Mammary epithelial cell (primary cell): ENCODE measurements at regions of chr5 and their contacts with region 1.

Region 1: GRCh38 chr5:151080623-151081430 is at the start of gene TNIP1:
- DNase-seq: peak; percentile 96
- H3K4me3 ChIP-seq: peak within 1 kb of the TSS; percentile 82 to 89 (median 85)
- H3K27ac ChIP-seq: peak within 1 kb of the TSS; percentile 99
- H3K4me1 ChIP-seq: peaks cover 67% of the 10 kb centered on the region
- H3K27me3 ChIP-seq: no peaks in the 10 kb centered on the region
- CTCF ChIP-seq: no peak
- total RNA-seq, gene TNIP1: 74.3 to 247 TPM

Region 2: GRCh38 chr5:151051066-151051930 is 29.5 kb before region 1 on chr5:
- CTCF ChIA-PET with region 1: interaction called, 3 read pairs
- dilution Hi-C with region 1: no loop called
- in situ Hi-C with region 1: no loop called
- intact Hi-C with region 1: loop called (anchors 1 kb)
- DNase-seq: peak; percentile 51
- H3K4me3 ChIP-seq: no peak overlapping the region
- H3K27ac ChIP-seq: no peak overlapping the region
- H3K4me1 ChIP-seq: no peaks in the 10 kb centered on the region
- H3K27me3 ChIP-seq: no peaks in the 10 kb centered on the region
- CTCF ChIP-seq: peak; percentile 83 to 85

Region 3: GRCh38 chr5:151093476-151093889 is 12.7 kb after region 1 on chr5:
- CTCF ChIA-PET with region 1: no interaction called
- dilution Hi-C with region 1: no loop called
- in situ Hi-C with region 1: no loop called
- intact Hi-C with region 1: loop called (anchors 1 kb)
- DNase-seq: peak; percentile 97
- H3K4me3 ChIP-seq: peak overlapping the region in 2 of 3 experiments; percentile 8 to 14
- H3K27ac ChIP-seq: peak overlapping the region; percentile 96
- H3K4me1 ChIP-seq: peaks cover 41% of the 10 kb centered on the region
- H3K27me3 ChIP-seq: no peaks in the 10 kb centered on the region
- CTCF ChIP-seq: no peak

Region 4: GRCh38 chr5:151115274-151115905 is 34.6 kb after region 1 on chr5:
- CTCF ChIA-PET with region 1: interaction called, 6 read pairs
- dilution Hi-C with region 1: no loop called
- in situ Hi-C with region 1: no loop called
- intact Hi-C with region 1: loop called (anchors 1 kb)
- DNase-seq: peak; percentile 32
- H3K4me3 ChIP-seq: no peak overlapping the region
- H3K27ac ChIP-seq: no peak overlapping the region
- H3K4me1 ChIP-seq: no peaks in the 10 kb centered on the region
- H3K27me3 ChIP-seq: no peaks in the 10 kb centered on the region
- CTCF ChIP-seq: peak; percentile 99

Region 5: DNA sequence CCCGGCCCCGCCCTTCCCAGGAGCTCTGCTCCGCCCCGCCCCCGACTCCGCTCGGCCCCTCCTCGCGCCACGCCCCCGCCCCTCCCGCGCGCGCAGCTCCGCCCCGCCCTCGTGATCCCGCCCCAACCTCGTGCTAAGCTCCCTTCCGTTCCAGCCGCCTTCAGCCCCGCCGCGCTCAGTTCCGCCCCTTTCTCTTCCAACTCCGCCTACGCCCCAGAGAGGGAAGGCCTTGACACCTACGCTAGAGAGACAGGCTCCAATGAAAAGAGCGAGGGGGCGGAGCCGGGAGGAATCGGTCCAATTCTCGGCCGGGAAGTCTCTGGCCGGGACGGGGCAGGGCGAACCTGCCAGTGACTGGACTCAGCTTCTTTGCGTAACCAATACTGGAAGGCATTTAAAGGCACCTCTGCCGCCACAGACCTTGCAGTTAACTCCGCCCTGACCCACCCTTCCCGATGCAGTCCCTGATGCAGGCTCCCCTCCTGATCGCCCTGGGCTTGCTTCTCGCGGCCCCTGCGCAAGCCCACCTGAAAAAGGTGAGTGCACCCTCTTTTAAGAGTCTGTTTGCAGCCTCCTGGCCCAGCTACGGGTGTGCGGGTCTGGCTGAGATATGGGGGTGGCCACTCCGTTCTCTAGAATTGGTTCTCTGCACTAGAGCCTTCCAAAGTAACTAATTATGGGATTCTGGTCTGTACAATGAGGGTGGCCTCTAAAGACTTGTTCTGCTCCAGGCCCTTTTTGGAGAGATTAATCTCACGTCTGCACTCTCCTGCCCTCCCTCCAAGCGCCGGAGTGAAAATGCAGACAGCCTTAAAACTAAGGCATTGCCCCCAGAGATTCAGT is 172.2 kb after region 1 on chr5 and contains the start of gene GM2A:
- CTCF ChIA-PET with region 1: interaction called, 12 read pairs
- dilution Hi-C with region 1: no loop called
- in situ Hi-C with region 1: no loop called
- intact Hi-C with region 1: no loop called
- DNase-seq: peak; percentile 100
- H3K4me3 ChIP-seq: peak within 1 kb of the TSS; percentile 64 to 92 (median 76)
- H3K27ac ChIP-seq: peak within 1 kb of the TSS; percentile 70
- H3K4me1 ChIP-seq: peaks cover 24% of the 10 kb centered on the region
- H3K27me3 ChIP-seq: no peaks in the 10 kb centered on the region
- CTCF ChIP-seq: no peak
- total RNA-seq, gene GM2A: 114 to 138 TPM

Region 6: DNA sequence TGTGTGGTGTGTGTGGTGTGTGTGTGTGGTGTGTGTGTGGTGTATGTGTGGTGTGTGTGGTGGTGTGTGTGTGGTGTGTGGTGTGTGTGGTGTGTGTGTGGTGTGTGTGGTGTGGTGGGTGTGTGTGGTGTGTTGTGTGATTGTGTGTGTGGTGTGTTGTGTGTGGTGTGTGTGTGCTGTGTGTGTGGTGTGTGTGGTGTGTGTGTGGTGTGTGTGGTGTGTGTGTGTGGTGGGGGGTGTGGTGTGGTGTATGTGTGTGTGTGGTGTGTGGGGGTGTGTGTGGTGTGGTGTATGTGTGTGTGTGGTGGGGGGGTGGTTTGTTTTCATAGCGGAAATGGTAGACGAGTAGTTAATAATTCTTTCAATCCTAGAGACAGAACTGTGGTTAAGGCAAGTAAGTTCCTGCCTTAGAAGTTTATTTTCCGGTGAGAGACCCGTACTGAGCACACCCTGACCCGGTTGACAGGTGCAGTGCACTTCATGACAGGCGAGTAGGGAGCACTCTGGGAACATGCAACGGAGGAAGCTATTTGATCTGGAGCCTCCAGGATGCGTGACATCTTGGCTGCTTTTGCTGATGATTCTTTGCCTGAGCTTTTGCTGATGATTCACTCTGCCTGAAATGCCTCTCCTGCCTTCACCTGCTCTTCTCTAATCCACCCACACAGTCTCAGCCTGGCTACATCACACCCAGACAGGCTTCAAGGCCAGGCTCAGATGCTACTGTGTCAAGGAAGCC is 532.0 kb after region 1 on chr5:
- CTCF ChIA-PET with region 1: no interaction called
- dilution Hi-C with region 1: loop called (anchors 25 kb)
- in situ Hi-C with region 1: no loop called
- intact Hi-C with region 1: no loop called
- DNase-seq: peak; percentile 100
- H3K4me3 ChIP-seq: no peak overlapping the region
- H3K27ac ChIP-seq: peak overlapping the region; percentile 97
- H3K4me1 ChIP-seq: peaks cover 62% of the 10 kb centered on the region
- H3K27me3 ChIP-seq: no peaks in the 10 kb centered on the region
- CTCF ChIP-seq: no peak